Gastrocnemius medialis (tissue), 4 donors: ENCODE measurements at regions of chr2 and their contacts with region 1.

Region 1: GRCh38 chr2:208265801-208266552 is at the start of gene PIKFYVE:
- DNase-seq: peak; percentile 94 to 95
- ATAC-seq: peak; percentile 94 to 97
- H3K4me3 ChIP-seq: peak within 1 kb of the TSS; percentile 71 to 97 (median 96)
- H3K27ac ChIP-seq: peak within 1 kb of the TSS; percentile 91 to 100 (median 98)
- H3K4me1 ChIP-seq: peaks cover 33 to 39% of the 10 kb centered on the region in 2 donors
- H3K27me3 ChIP-seq: no peaks in the 10 kb centered on the region
- CTCF ChIP-seq: peak in 1 of 5 experiments; percentile 18
- POLR2A ChIP-seq: peak; percentile 83 to 88
- total RNA-seq, gene PIKFYVE: 14.0 to 23.9 (median 17.9) TPM

Region 2: GRCh38 chr2:207710814-207711740 is 554.9 kb before region 1 on chr2 and contains the start of gene CCNYL1:
- in situ Hi-C with region 1: no loop called
- intact Hi-C with region 1: loop called (anchors 10 kb)
- DNase-seq: peak; percentile 99
- ATAC-seq: peak; percentile 96 to 97
- H3K4me3 ChIP-seq: peak within 1 kb of the TSS; percentile 79 to 95 (median 89)
- H3K27ac ChIP-seq: peak within 1 kb of the TSS; percentile 76 to 88 (median 80)
- H3K4me1 ChIP-seq: peaks cover 18 to 19% of the 10 kb centered on the region in 2 donors
- H3K27me3 ChIP-seq: no peaks in the 10 kb centered on the region
- CTCF ChIP-seq: peak in 4 of 5 experiments; percentile 26 to 52 (median 45)
- POLR2A ChIP-seq: peak; percentile 87 to 98
- total RNA-seq, gene CCNYL1: 3.3 to 10.1 (median 7.1) TPM

Region 3: GRCh38 chr2:208315081-208315788 is 49.3 kb after region 1 on chr2:
- in situ Hi-C with region 1: no loop called
- intact Hi-C with region 1: loop called (anchors 2 kb)
- DNase-seq: peak; percentile 76 to 85
- ATAC-seq: peak; percentile 99 to 100
- H3K4me3 ChIP-seq: no peak overlapping the region
- H3K27ac ChIP-seq: peak overlapping the region; percentile 72 to 84 (median 79)
- H3K4me1 ChIP-seq: peaks cover 27 to 34% of the 10 kb centered on the region in 2 donors
- H3K27me3 ChIP-seq: no peaks in the 10 kb centered on the region
- CTCF ChIP-seq: no peak
- POLR2A ChIP-seq: no peak

Region 4: DNA sequence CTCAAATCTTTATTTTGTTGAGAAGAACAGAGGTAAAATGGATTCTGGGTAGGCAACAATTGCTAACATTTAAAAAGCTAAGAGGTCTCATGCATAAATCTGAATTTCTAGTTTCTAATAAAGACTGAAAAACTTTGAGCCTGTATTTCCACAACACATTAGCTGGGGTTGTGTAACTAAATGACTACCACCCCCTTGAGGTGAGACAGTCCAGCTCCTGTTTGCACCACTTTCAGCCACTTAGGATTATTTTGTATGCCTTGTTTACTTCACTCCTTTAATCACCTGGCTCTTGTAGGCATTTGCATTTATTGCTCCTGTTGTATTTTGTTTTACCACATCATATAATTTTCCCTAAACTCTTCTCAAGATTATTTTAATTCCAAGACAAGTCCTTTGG is 517.2 kb after region 1 on chr2:
- in situ Hi-C with region 1: no loop called
- intact Hi-C with region 1: no loop called
- DNase-seq: no peak
- ATAC-seq: no peak
- H3K4me3 ChIP-seq: no peak overlapping the region
- H3K27ac ChIP-seq: no peak overlapping the region
- H3K4me1 ChIP-seq: no peaks in the 10 kb centered on the region
- H3K27me3 ChIP-seq: no peaks in the 10 kb centered on the region
- CTCF ChIP-seq: no peak
- POLR2A ChIP-seq: no peak